Posterior cingulate gyrus (tissue), 11 donors: ENCODE measurements at regions of chr3 and their contacts with region 1.

Region 1: DNA sequence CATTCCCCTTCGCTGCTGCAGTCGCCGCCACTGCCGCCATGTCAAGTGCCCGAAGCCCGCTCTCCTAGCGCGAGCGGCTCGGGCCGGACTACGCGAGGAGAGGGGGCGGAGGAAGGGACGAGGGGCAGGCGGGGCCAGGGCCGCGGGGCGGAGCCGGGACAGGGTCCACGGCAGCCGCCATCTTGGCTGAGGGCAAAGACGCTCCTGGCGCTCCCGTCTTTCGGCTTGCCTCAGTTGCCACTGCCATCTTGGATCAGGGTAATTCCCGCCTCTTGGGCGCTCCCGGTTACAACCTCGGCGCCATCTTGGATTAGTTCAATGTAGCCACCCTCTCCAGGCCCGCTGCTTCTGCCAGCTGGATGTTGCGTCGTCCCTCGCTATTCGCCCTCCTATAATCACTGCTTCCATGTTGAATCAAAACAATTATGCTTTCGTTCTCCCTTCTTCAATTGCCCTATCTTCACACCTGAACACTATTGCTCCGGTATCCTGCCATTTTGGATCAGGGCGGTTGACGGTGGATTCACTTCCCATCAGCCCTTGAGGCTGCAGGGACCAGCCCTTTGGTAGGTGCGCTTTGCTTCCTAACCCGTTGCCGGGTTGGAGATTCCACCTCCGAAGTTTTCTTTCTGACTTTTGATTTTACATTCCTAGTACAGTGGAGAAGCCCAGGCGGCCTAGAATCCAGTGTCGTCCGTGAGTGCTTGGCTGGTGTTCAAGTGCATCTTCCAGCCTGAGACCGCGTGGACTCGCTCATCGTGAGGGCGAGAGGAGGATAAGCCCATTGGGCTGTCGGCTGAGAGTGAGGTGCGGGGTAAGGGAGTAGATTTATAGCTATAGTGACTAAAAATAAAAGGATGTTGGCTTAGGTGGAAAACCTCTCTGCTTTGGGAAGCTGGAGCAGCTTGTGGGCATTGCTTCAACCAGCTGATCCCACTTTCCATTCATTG is at the start of gene HACD2:
- DNase-seq: peak; percentile 94 to 100 (median 96)

Region 2: GRCh38 chr3:123620343-123620742 is 35.1 kb after region 1 on chr3:
- intact Hi-C with region 1: loop called (anchors 2 kb)
- DNase-seq: peak in 3 of 10 donors; percentile 45 to 76 (median 51)